ENCODE measurements at regions of chr9 and their contacts with region 1.

Region 1: DNA sequence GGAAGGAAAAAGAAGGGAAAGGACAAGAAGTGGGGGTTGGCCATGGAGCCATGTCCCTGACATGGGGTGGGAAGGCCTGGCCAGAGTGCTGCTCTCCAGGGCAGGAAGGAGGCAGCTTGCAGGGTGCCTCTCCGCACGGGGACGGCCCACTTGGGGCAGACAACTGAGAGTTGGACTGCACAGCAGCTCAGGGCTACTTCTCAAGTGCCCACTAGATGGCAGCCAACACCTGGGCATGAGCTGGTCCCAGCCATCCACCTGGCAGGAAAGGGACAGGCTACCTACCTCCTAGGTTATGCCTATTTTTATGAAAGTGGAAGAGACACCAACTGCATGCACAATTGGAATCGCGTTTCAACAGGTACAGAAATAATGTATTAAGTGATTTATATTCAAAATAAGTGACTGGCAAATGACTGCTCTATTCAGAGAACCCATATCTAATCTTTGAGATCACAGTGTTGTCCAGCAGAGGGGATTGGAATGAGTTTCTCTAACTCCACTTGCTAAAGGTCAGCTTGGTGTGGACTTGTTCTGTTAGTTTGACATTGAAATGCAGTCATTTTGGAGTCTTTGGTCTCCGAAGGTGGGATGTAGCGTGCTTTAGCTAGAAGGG is 113.4 kb downstream of the SYK start:
- DNase-seq: peak; percentile 81
- H3K4me3 Mint-ChIP-seq: no peak overlapping the region
- H3K27ac Mint-ChIP-seq: no peak overlapping the region
- H3K4me1 Mint-ChIP-seq: no peaks in the 10 kb centered on the region
- H3K27me3 Mint-ChIP-seq: no peaks in the 10 kb centered on the region

Region 2: DNA sequence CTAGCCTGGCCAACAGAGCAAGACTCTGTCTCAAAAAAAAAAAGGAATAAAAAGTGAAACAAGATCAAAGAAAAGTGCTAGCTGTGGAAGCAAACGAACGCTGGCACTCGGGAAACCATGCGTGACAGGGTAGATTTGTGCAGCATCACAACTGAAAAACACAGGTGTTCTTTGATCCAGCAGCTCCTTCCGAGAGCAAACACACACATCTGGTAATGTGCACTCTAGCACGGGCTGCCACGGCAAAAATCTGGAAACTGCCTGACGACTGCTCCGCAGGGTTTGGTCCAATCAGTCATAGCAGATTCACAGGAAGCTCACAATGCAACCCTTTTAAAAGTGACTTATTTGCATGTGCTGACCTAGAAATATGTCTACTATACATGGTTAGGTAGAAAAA is 33.3 kb before region 1 on chr9:
- CTCF ChIA-PET with region 1: no interaction called
- POLR2A ChIA-PET with region 1: no interaction called
- intact Hi-C with region 1: no loop called
- DNase-seq: no peak
- H3K4me3 Mint-ChIP-seq: no peak overlapping the region
- H3K27ac Mint-ChIP-seq: no peak overlapping the region
- H3K4me1 Mint-ChIP-seq: no peaks in the 10 kb centered on the region
- H3K27me3 Mint-ChIP-seq: no peaks in the 10 kb centered on the region

Region 3: GRCh38 chr9:90925581-90926257 is 10.7 kb after region 1 on chr9:
- CTCF ChIA-PET with region 1: interaction called, 14 read pairs
- POLR2A ChIA-PET with region 1: no interaction called
- intact Hi-C with region 1: no loop called
- DNase-seq: no peak
- H3K4me3 Mint-ChIP-seq: no peak overlapping the region
- H3K27ac Mint-ChIP-seq: no peak overlapping the region
- H3K4me1 Mint-ChIP-seq: peaks cover 2% of the 10 kb centered on the region
- H3K27me3 Mint-ChIP-seq: peaks cover 18% of the 10 kb centered on the region

Region 4: GRCh38 chr9:91029650-91030361 is 114.8 kb after region 1 on chr9:
- CTCF ChIA-PET with region 1: interaction called, 14 read pairs
- POLR2A ChIA-PET with region 1: no interaction called
- intact Hi-C with region 1: loop called (anchors 1 kb)
- DNase-seq: no peak
- H3K4me3 Mint-ChIP-seq: no peak overlapping the region
- H3K27ac Mint-ChIP-seq: no peak overlapping the region
- H3K4me1 Mint-ChIP-seq: peaks cover 6% of the 10 kb centered on the region
- H3K27me3 Mint-ChIP-seq: peaks cover 11% of the 10 kb centered on the region

Region 5: GRCh38 chr9:91082731-91083130 is 167.8 kb after region 1 on chr9:
- CTCF ChIA-PET with region 1: no interaction called
- POLR2A ChIA-PET with region 1: no interaction called
- intact Hi-C with region 1: no loop called
- DNase-seq: no peak
- H3K4me3 Mint-ChIP-seq: no peak overlapping the region
- H3K27ac Mint-ChIP-seq: peak overlapping the region; percentile 1
- H3K4me1 Mint-ChIP-seq: peaks cover 24% of the 10 kb centered on the region
- H3K27me3 Mint-ChIP-seq: peaks cover 2% of the 10 kb centered on the region

Region 6: DNA sequence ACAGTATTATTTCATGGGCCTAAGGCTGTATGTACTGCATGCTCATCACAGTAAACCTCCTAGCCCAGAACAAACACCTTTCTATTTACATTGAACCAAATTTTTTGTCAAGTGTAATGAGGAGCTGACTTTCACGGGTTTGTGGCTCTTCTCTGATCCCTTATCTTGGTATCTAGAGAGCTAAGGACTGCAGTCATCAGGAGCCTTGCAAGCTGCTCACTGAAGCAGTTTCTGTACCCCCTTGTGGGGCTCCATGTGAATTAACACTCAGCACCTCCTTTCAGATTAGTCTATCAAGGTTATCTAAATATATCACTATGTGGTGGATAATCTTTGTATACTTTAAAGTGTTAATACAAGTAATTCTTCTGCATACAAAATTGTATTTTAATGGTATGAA is 338.5 kb after region 1 on chr9:
- CTCF ChIA-PET with region 1: interaction called, 11 read pairs
- POLR2A ChIA-PET with region 1: no interaction called
- intact Hi-C with region 1: no loop called
- DNase-seq: no peak
- H3K4me3 Mint-ChIP-seq: no peak overlapping the region
- H3K27ac Mint-ChIP-seq: no peak overlapping the region
- H3K4me1 Mint-ChIP-seq: peaks cover 11% of the 10 kb centered on the region
- H3K27me3 Mint-ChIP-seq: no peaks in the 10 kb centered on the region

Region 7: DNA sequence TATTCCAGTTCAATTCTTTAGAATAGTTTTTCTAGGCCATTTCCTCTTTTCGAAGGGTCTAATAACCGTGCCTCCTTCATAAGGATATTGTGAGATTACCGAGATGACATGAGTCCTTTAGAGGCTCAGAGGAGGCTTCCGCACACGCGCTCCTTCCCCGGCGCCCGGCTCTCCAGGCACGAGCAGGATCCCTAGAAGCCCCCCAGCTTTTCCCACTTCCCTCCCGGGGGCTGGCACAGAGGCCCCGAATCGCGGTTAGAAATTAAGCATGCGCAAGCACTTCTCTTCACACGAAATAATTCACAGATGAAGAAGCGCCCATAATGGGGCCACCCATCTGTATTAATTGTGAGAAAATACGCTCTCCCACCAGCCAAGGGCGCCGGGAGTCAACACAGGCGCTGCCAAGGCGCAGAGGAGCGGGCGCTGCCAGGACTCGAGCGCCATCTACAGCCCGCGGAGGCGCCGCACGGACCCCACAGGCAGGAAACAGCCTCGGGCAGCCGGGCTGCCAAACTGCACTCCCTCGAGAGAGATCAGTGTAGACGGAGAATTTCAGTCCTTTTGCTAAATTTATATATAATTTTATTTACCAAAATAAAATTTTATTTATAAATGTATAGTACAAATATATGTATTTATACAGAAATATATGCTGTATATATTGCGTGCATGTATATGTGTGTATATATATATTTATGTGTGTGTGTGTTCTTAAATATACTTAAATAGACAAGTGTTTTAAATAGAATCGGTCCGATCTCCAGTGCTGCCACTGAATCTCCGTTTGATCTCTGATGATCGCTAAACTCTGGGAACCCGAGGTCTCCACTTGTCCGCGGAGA is 766.7 kb after region 1 on chr9:
- CTCF ChIA-PET with region 1: interaction called, 23 read pairs
- POLR2A ChIA-PET with region 1: no interaction called
- intact Hi-C with region 1: loop called (anchors 1 kb)
- DNase-seq: peak; percentile 82
- H3K4me3 Mint-ChIP-seq: no peak overlapping the region
- H3K27ac Mint-ChIP-seq: no peak overlapping the region
- H3K4me1 Mint-ChIP-seq: peaks cover 5% of the 10 kb centered on the region
- H3K27me3 Mint-ChIP-seq: peaks cover 30% of the 10 kb centered on the region

Region 8: GRCh38 chr9:91734371-91734981 is 819.5 kb after region 1 on chr9:
- CTCF ChIA-PET with region 1: interaction called, 46 read pairs
- POLR2A ChIA-PET with region 1: no interaction called
- intact Hi-C with region 1: no loop called
- DNase-seq: peak; percentile 68
- H3K4me3 Mint-ChIP-seq: no peak overlapping the region
- H3K27ac Mint-ChIP-seq: no peak overlapping the region
- H3K4me1 Mint-ChIP-seq: peaks cover 3% of the 10 kb centered on the region
- H3K27me3 Mint-ChIP-seq: peaks cover 10% of the 10 kb centered on the region

Measured in activated CD4-positive, alpha-beta memory T cell treated with anti-CD3 and anti-CD28 coated beads for 36 hours (primary cell).